ENCODE measurements at regions of chr16 and their contacts with region 1.

Region 1: GRCh38 chr16:71311553-71312158 is 22.5 kb upstream of the CMTR2 start:
- DNase-seq: peak in 5 of 7 donors; percentile 6 to 24 (median 18)
- H3K4me3 ChIP-seq: no peak overlapping the region
- H3K27ac ChIP-seq: no peak overlapping the region
- H3K4me1 ChIP-seq: no peaks in the 10 kb centered on the region
- H3K27me3 ChIP-seq: peaks cover 10% of the 10 kb centered on the region
- CTCF ChIP-seq: peak; percentile 62 to 76 (median 74)
- POLR2A ChIP-seq: no peak

Region 2: GRCh38 chr16:71214746-71215381 is 96.8 kb before region 1 on chr16:
- intact Hi-C with region 1: loop called in 1 of 2 experiments (anchors 5 kb)
- DNase-seq: no peak
- H3K4me3 ChIP-seq: no peak overlapping the region
- H3K27ac ChIP-seq: no peak overlapping the region
- H3K4me1 ChIP-seq: no peaks in the 10 kb centered on the region
- H3K27me3 ChIP-seq: no peaks in the 10 kb centered on the region
- CTCF ChIP-seq: peak in 2 of 6 experiments; percentile 33 to 45
- POLR2A ChIP-seq: no peak

Region 3: DNA sequence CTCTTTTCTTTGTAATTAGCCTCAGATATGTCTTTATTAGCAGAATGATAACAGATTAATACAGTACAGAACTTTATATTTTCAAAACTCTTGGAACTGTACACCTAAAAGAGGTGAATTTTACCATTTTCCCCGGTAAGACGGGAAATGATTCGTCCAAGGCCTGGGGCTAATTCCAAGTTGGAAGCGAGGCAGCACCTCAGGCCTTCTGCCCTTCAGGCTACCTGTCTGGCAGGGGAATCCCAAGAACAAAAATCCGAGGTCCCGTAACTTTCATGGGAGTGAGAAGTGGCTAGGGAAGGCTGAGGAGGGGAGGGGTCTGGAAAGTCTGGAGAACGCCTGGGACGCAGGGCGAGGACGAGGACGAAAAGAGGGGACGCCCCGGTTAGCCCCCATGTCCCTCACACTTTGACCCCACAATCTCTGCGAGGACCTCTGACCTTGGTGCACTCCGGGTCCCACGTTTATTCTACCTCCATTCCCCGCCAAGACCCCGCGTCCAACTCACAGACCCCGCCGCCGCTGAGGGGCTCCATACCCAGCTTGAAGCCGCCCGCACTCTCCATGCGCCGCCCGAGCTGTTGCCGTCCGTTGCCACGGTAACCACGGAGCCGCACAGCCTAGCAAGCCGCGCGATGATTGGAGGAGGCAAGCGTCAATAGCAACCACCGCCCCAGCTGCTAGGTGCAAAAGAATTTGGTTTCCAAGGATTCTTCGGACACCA is 81.4 kb before region 1 on chr16 and contains the start of gene HYDIN:
- intact Hi-C with region 1: no loop called
- DNase-seq: peak; percentile 37 to 86 (median 70)
- H3K4me3 ChIP-seq: peak within 1 kb of the TSS in 1 of 4 donors; percentile 33
- H3K27ac ChIP-seq: no peak within 1 kb of the TSS
- H3K4me1 ChIP-seq: no peaks in the 10 kb centered on the region
- H3K27me3 ChIP-seq: peaks cover 3% of the 10 kb centered on the region
- CTCF ChIP-seq: no peak
- POLR2A ChIP-seq: no peak
- total RNA-seq, gene HYDIN: 0.26 to 5.1 (median 1.9) TPM

Region 4: DNA sequence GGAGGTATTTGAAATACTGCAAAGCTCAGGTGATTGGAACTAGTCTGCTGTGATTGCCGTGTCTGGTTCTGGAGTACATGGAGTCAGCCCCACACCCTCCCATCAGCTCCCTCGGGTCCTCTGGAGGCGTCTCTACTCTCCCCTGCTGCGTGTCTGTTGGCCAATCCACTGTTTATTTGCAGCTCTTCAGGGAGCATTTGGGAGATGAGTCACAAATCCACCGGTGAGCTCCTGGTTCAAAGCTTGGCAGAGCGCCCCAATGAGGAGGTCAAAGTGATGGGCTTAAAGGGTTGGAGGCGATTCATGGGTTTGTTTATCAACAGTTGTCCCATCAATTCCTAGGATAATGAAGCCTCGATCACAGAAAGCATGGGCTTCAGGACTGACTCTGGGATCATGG is 61.4 kb after region 1 on chr16:
- intact Hi-C with region 1: no loop called
- DNase-seq: peak in 1 of 7 donors; percentile 21
- H3K4me3 ChIP-seq: no peak overlapping the region
- H3K27ac ChIP-seq: no peak overlapping the region
- H3K4me1 ChIP-seq: no peaks in the 10 kb centered on the region
- H3K27me3 ChIP-seq: no peaks in the 10 kb centered on the region
- CTCF ChIP-seq: no peak
- POLR2A ChIP-seq: no peak